Dendritic cell treated with granulocyte-macrophage colony-stimulating factor and Interleukin-4, amounts not matched to agents 40 ng/mL and 50 ng/mL, for 4 days (primary cell): ENCODE measurements at regions of chr10 and their contacts with region 1.

Region 1: DNA sequence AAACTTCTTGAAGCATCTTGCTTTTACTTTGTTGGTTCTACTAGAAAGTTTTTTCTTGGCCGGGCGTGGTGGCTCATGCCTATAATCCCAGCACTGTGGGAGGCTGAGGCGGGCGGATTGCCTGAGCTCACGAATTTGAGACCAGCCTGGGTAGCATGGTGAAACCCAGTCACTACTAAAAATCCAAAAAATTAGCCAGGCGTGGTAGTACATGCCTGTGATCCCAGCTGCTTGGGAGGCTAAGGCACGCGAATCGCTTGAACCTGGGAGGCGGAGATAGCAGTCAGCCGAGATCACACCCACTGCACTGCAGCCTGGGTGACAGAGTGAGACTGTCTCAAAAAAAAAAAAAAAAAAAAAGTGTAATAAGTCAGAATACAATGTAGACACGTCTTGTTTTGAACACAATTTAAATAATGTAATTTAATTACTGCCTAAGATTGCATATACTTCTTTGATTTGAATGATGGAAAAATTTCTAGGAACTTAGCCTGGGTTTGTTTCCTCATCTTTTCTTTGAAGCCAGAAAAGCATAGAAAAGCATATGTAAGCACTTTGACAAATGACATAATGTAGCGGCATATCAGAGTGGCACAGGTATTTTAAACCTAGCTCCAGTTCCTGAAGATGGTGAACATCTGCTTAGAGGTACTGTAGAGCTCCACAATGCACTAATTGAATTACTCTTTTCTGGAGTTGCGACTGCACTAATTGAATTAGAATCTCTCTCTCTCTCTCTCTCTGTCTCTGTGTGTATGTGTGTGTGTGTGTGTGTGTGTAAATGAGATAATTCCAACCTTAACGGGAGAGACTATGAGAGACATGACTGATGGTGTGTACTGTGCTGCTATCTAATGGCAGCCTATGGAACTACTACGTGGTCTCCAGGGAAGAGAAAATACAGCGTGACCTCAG is 87.8 kb downstream of the BTRC start:
- H3K4me3 Mint-ChIP-seq: no peak overlapping the region
- H3K27ac Mint-ChIP-seq: no peak overlapping the region
- H3K4me1 Mint-ChIP-seq: peaks cover 6% of the 10 kb centered on the region
- H3K27me3 Mint-ChIP-seq: no peaks in the 10 kb centered on the region

Region 2: DNA sequence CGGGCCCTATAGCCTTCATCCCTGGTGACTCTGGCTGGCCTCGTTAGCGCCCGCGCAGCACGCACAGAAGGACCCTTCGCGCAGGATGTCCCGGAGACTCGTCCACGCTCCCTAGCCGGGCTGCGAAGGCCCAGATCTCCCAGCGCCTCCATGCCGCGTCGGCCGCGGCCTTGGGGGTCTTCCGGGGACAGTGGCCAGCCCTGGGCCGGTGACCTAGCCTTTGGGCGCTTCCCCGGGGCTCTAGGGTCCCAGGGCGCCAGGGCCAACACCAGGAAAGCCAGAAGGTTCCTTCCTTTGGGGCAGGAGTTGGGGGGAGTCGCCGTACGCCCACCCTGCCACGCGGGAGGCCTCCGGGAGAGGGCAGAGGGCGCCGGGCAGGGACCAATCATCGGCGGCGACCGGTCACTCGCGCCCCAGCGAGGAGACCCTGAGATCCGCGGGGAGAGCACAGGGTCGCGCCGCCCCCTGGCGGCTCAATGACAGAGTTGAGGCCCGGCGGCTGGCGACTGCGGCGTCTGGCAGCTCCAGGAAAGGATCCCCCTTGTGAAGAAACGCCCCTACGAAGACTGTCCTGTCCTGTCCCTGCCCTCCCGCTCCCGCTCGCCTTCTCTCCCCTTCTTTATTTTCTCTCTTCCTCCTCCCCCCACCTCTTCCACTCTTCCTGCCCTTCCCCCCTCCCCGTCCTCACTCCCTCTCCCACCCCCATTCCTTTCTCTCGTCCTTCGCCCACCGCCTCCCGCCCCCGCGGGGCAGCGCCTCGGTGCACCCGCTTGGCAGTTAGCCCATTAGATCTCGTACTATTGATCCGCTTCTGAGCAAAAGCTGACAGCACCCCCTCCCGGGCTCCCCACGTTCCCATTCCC is 150.2 kb before region 1 on chr10:
- intact Hi-C with region 1: loop called (anchors 5 kb)
- H3K4me3 Mint-ChIP-seq: peak overlapping the region; percentile 62
- H3K27ac Mint-ChIP-seq: no peak overlapping the region
- H3K4me1 Mint-ChIP-seq: no peaks in the 10 kb centered on the region
- H3K27me3 Mint-ChIP-seq: peaks cover 90% of the 10 kb centered on the region

Region 3: GRCh38 chr10:101536800-101537199 is 95.0 kb after region 1 on chr10:
- intact Hi-C with region 1: no loop called
- H3K4me3 Mint-ChIP-seq: no peak overlapping the region
- H3K27ac Mint-ChIP-seq: no peak overlapping the region
- H3K4me1 Mint-ChIP-seq: no peaks in the 10 kb centered on the region
- H3K27me3 Mint-ChIP-seq: no peaks in the 10 kb centered on the region